OCI-LY7 (cell line): ENCODE measurements at regions of chr10 and their contacts with region 1.

Region 1: GRCh38 chr10:110547139-110547761 is 20.2 kb upstream of the SMC3 start:
- DNase-seq: peak; percentile 86
- H3K4me3 ChIP-seq: no peak overlapping the region
- H3K27ac ChIP-seq: no peak overlapping the region
- H3K4me1 ChIP-seq: peaks cover 15% of the 10 kb centered on the region
- CTCF ChIP-seq: peak; percentile 98

Region 2: GRCh38 chr10:110304780-110305421 is 242.3 kb before region 1 on chr10 and contains the start of gene SMNDC1:
- CTCF ChIA-PET with region 1: interaction called, 6 read pairs
- POLR2A ChIA-PET with region 1: interaction called, 8 read pairs
- intact Hi-C with region 1: loop called (anchors 1 kb)
- DNase-seq: peak; percentile 99
- H3K4me3 ChIP-seq: peak within 1 kb of the TSS; percentile 99
- H3K27ac ChIP-seq: peak within 1 kb of the TSS; percentile 69
- H3K4me1 ChIP-seq: peaks cover 49% of the 10 kb centered on the region
- CTCF ChIP-seq: no peak
- total RNA-seq, gene SMNDC1: 8.1 and 10.0 TPM in 2 replicates

Region 3: GRCh38 chr10:110311357-110311949 is 235.8 kb before region 1 on chr10:
- CTCF ChIA-PET with region 1: interaction called, 4 read pairs
- POLR2A ChIA-PET with region 1: interaction called, 8 read pairs
- intact Hi-C with region 1: loop called (anchors 1 kb)
- DNase-seq: peak; percentile 77
- H3K4me3 ChIP-seq: no peak overlapping the region
- H3K27ac ChIP-seq: no peak overlapping the region
- H3K4me1 ChIP-seq: peaks cover 36% of the 10 kb centered on the region
- CTCF ChIP-seq: peak; percentile 93

Region 4: GRCh38 chr10:110502851-110503301 is 44.4 kb before region 1 on chr10:
- CTCF ChIA-PET with region 1: interaction called, 3 read pairs
- POLR2A ChIA-PET with region 1: interaction called, 3 read pairs
- intact Hi-C with region 1: loop called (anchors 2 kb)
- DNase-seq: peak; percentile 92
- H3K4me3 ChIP-seq: peak overlapping the region; percentile 20
- H3K27ac ChIP-seq: peak overlapping the region; percentile 36
- H3K4me1 ChIP-seq: peaks cover 49% of the 10 kb centered on the region
- CTCF ChIP-seq: no peak

Region 5: GRCh38 chr10:110625356-110625894 is 78.2 kb after region 1 on chr10:
- CTCF ChIA-PET with region 1: no interaction called
- POLR2A ChIA-PET with region 1: no interaction called
- intact Hi-C with region 1: no loop called
- DNase-seq: no peak
- H3K4me3 ChIP-seq: no peak overlapping the region
- H3K27ac ChIP-seq: no peak overlapping the region
- H3K4me1 ChIP-seq: no peaks in the 10 kb centered on the region
- CTCF ChIP-seq: no peak

Region 6: GRCh38 chr10:110706690-110707098 is 159.4 kb after region 1 on chr10:
- CTCF ChIA-PET with region 1: no interaction called
- POLR2A ChIA-PET with region 1: no interaction called
- intact Hi-C with region 1: no loop called
- DNase-seq: no peak
- H3K4me3 ChIP-seq: no peak overlapping the region
- H3K27ac ChIP-seq: no peak overlapping the region
- H3K4me1 ChIP-seq: no peaks in the 10 kb centered on the region
- CTCF ChIP-seq: no peak